H1 (cell line): ENCODE measurements at regions of chr1 and their contacts with region 1.

Region 1: DNA sequence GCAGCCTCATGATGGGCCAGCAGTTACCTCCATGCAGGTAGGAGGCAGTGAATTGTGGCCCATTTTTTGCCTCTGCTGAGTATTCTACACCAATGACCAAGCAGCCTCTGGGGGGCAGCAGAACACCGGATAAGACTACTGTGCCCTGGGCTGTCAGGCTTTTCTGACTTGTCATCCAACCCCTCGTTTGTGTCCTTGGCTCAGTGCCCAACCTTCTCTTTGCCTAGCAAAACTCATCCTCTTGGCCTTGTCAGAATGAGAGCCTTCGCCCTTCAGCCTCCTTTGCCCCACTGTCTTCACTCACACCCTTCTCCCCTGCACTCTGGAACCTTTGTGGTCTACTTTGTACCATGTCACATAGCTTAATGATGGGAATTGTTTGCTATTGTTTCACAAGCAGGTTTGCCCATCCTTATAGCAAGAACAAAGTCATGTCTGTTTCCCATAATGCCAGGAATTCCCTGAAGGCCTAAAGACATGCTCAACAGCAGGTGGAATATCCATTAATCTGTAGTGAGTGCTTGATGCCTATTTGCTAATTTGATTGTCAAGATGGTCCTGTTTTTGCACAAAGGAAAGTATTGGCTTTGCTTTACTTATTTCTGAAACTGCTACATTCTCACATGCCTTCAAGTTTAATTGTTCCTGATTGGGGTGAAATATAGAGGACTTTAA is 255.9 kb downstream of the HHAT start:
- DNase-seq: peak; percentile 63 to 91
- H3K4me3 ChIP-seq: no peak overlapping the region
- H3K27ac ChIP-seq: no peak overlapping the region
- H3K4me1 ChIP-seq: peaks cover 0 to 3% (median 0%) of the 10 kb centered on the region in 4 experiments; a peak in 1 of 7 replicates
- H3K27me3 ChIP-seq: no peaks in the 10 kb centered on the region
- CTCF ChIP-seq: peak; percentile 64 to 95 (median 90)
- EP300 ChIP-seq: no peak
- POLR2A ChIP-seq: no peak
- RAD21 ChIP-seq: peak; percentile 98 to 100

Region 2: DNA sequence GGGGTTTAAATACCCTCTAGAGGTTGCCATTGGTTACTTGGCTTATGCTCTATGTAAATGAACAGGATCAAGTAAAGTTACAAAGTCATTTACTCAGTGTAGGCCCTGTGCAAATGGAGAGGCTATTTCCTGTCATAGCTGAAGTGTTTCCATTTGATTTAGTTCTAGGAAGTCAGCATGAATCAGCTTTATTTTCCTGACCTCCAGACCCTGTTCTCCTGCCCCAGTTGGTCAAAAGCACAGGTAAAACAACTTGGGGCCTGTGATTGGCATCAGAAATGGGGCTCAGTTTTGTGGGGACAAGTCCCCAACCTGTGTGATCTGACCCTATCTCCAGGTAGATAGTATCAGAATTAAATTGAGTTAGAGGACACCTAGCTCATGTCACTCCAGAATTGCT is 15.9 kb before region 1 on chr1:
- CTCF ChIA-PET with region 1: interaction called, 22 read pairs
- POLR2A ChIA-PET with region 1: no interaction called
- DNase-seq: no peak
- H3K4me3 ChIP-seq: no peak overlapping the region
- H3K27ac ChIP-seq: no peak overlapping the region
- H3K4me1 ChIP-seq: no peaks in the 10 kb centered on the region
- H3K27me3 ChIP-seq: no peaks in the 10 kb centered on the region
- CTCF ChIP-seq: no peak
- EP300 ChIP-seq: no peak
- POLR2A ChIP-seq: no peak
- RAD21 ChIP-seq: no peak

Region 3: GRCh38 chr1:210688512-210689234 is 104.1 kb after region 1 on chr1:
- CTCF ChIA-PET with region 1: no interaction called
- POLR2A ChIA-PET with region 1: no interaction called
- DNase-seq: no peak
- H3K4me3 ChIP-seq: no peak overlapping the region
- H3K27ac ChIP-seq: no peak overlapping the region
- H3K4me1 ChIP-seq: no peaks in the 10 kb centered on the region
- H3K27me3 ChIP-seq: no peaks in the 10 kb centered on the region
- CTCF ChIP-seq: no peak
- EP300 ChIP-seq: no peak
- POLR2A ChIP-seq: no peak
- RAD21 ChIP-seq: no peak